H1 (cell line): ENCODE measurements at regions of chr6 and their contacts with region 1.

Region 1: GRCh38 chr6:112180095-112180820 is 74.1 kb downstream of the LAMA4 start:
- DNase-seq: no peak
- H3K4me3 ChIP-seq: no peak overlapping the region
- H3K27ac ChIP-seq: no peak overlapping the region
- H3K4me1 ChIP-seq: no peaks in the 10 kb centered on the region
- H3K27me3 ChIP-seq: no peaks in the 10 kb centered on the region
- CTCF ChIP-seq: peak in 2 of 3 experiments; percentile 58 to 64; a peak in 2 of 4 replicates
- EP300 ChIP-seq: no peak
- POLR2A ChIP-seq: no peak
- RAD21 ChIP-seq: peak; percentile 84 to 86

Region 2: DNA sequence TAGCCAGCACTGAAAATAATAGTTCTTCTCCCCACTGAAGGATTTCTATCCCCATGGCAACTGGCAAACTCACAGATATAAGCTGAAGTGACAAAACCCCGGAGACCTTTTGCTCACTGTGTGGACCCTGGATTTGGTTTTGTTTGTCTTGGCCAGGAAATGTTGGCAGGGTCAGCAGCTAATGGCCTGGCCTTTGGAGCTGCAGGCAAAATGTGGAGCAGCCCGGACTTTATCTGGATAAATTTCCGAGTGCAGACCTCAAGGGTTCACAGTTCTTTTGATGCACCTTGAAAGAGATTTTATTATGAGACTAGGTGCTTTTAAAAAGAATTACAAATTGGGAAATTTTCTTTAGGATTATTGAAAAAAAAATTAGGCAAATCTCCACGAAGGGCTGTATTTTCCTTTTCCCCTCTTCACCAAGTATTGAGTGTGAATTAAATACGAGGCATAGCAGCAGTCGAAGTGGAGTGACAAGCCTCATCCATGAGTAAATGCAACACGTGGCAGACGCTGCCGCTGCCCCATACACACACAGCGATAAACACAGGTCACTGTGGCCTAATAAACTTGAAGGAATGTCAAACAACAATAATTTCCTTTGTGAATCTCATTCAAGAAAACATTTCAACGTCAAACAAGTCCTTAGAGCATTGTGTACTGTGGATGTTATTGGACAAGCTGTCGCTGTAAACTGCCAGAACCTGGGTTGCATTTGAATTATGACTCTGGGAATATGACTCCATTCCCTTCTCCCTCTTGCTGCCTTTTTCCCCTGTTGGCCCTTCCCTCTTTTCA is 161.4 kb before region 1 on chr6:
- CTCF ChIA-PET with region 1: no interaction called
- POLR2A ChIA-PET with region 1: no interaction called
- DNase-seq: no peak
- H3K4me3 ChIP-seq: no peak overlapping the region
- H3K27ac ChIP-seq: no peak overlapping the region
- H3K4me1 ChIP-seq: no peaks in the 10 kb centered on the region
- H3K27me3 ChIP-seq: no peaks in the 10 kb centered on the region
- CTCF ChIP-seq: no peak
- EP300 ChIP-seq: no peak
- POLR2A ChIP-seq: no peak
- RAD21 ChIP-seq: no peak

Region 3: DNA sequence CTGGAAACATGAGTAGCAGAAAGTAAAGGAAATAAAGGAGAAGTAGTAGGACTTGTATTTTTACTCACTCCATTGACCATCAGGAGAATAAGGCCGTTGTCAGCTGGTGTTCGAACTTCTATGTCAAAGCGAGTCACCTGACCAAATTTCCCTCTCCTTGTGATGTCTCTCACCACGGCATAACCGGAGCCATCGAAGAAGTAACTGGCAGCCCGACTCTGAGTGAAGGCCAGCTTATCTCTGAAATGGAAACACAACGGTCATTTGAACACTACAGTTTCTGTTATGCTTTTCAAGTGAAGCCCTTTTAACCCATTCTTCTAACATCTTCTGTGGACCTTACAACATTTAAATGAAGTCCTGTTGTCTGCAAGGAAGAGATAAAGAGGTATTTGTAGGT is 41.2 kb before region 1 on chr6:
- CTCF ChIA-PET with region 1: no interaction called
- POLR2A ChIA-PET with region 1: no interaction called
- DNase-seq: no peak
- H3K4me3 ChIP-seq: no peak overlapping the region
- H3K27ac ChIP-seq: no peak overlapping the region
- H3K4me1 ChIP-seq: no peaks in the 10 kb centered on the region
- H3K27me3 ChIP-seq: no peaks in the 10 kb centered on the region
- CTCF ChIP-seq: no peak
- EP300 ChIP-seq: no peak
- POLR2A ChIP-seq: no peak
- RAD21 ChIP-seq: no peak

Region 4: DNA sequence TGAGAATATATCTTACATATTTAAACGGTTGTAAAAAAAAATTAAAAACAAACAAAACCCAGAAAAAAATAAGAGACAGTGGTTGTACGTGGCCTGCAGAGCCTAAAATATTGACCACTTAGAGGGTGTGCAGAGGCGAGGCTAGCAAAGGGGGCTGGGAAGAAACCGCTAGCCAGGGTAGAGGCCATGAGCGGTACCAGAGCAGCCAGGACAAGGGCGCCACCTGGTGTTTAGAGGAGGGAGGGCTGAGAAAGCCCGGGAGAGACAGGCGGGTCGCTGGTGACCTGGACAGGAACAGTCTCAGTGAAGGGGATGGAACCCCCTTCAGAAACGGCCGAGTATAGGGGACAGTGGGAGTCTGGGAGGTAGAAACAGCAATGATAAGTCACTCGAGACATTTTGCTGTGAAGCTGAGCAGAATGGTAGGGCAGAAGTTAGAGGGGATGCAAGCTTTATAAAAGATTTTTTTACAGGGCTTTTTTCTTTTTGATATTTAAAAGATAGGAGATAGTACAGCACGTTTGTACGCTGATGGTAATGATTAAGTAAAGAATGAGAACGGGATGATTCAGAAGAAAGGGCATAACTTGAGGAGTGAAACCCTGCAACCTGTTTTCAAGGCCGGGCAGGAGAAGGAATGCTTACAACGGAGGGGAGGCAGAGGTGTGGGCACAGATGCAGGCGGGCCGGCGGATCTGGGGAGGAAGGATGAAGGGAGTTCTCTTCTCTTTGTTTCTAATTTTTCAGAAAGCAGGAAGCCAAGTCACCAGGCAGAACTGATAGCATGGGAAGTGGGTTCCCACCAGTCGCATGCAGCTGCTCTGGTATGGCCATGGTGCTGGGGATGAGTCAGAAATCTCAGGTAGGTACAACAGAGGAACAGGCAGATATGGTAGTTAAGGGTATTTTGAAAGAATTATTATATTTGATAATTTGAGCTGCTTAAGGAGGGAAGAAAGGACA is 16.7 kb before region 1 on chr6:
- CTCF ChIA-PET with region 1: interaction called, 10 read pairs
- POLR2A ChIA-PET with region 1: no interaction called
- DNase-seq: peak; percentile 50 to 94
- H3K4me3 ChIP-seq: no peak overlapping the region
- H3K27ac ChIP-seq: no peak overlapping the region
- H3K4me1 ChIP-seq: no peaks in the 10 kb centered on the region
- H3K27me3 ChIP-seq: no peaks in the 10 kb centered on the region
- CTCF ChIP-seq: peak; percentile 91 to 96 (median 93)
- EP300 ChIP-seq: no peak
- POLR2A ChIP-seq: no peak
- RAD21 ChIP-seq: peak; percentile 91 to 94

Region 5: GRCh38 chr6:112199001-112199403 is 18.7 kb after region 1 on chr6:
- CTCF ChIA-PET with region 1: interaction called, 23 read pairs
- POLR2A ChIA-PET with region 1: no interaction called
- DNase-seq: no peak
- H3K4me3 ChIP-seq: no peak overlapping the region
- H3K27ac ChIP-seq: no peak overlapping the region
- H3K4me1 ChIP-seq: peaks cover 0 to 2% (median 0%) of the 10 kb centered on the region in 4 experiments; a peak in 2 of 7 replicates
- H3K27me3 ChIP-seq: peaks cover 0 to 1% (median 0%) of the 10 kb centered on the region in 4 experiments; a peak in 1 of 7 replicates
- CTCF ChIP-seq: no peak
- EP300 ChIP-seq: no peak
- POLR2A ChIP-seq: no peak
- RAD21 ChIP-seq: no peak

Region 6: GRCh38 chr6:112253841-112254816 is 73.9 kb after region 1 on chr6 and contains the start of gene LAMA4:
- CTCF ChIA-PET with region 1: interaction called, 16 read pairs
- POLR2A ChIA-PET with region 1: no interaction called
- DNase-seq: peak in 1 of 2 experiments; percentile 74
- H3K4me3 ChIP-seq: peak within 1 kb of the TSS; percentile 63 to 76 (median 70)
- H3K27ac ChIP-seq: no peak within 1 kb of the TSS
- H3K4me1 ChIP-seq: peaks cover 0 to 7% (median 2%) of the 10 kb centered on the region in 4 experiments; a peak in 3 of 7 replicates
- H3K27me3 ChIP-seq: peaks cover 2 to 35% (median 16%) of the 10 kb centered on the region in 4 experiments
- CTCF ChIP-seq: no peak
- EP300 ChIP-seq: no peak
- POLR2A ChIP-seq: no peak
- RAD21 ChIP-seq: no peak
- total RNA-seq, gene LAMA4: 0.92 and 1.5 TPM in 2 replicates

Region 7: DNA sequence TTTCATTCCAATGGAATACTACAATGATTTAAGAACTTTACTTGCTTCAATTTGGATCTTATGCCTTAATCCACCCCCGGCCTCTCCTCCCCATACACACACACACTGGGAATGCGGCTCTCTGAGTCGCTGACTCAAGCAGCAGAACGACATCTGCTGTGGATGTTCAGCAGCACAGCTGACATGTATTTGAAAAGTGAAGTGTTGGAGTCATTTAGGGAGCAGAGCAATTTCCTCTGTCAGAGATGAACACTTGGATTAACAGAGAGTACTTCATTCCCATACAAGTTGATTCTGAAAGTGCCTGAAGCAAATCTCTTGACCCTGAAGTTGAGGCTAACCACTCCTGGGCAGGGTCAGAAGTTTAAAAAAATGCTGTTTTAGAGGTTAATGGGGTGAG is 102.0 kb after region 1 on chr6:
- CTCF ChIA-PET with region 1: interaction called, 23 read pairs
- POLR2A ChIA-PET with region 1: no interaction called
- DNase-seq: no peak
- H3K4me3 ChIP-seq: no peak overlapping the region
- H3K27ac ChIP-seq: no peak overlapping the region
- H3K4me1 ChIP-seq: no peaks in the 10 kb centered on the region
- H3K27me3 ChIP-seq: no peaks in the 10 kb centered on the region
- CTCF ChIP-seq: peak in 1 of 3 experiments; percentile 23; a peak in 1 of 4 replicates
- EP300 ChIP-seq: no peak
- POLR2A ChIP-seq: no peak
- RAD21 ChIP-seq: peak; percentile 5 to 22; a peak in 2 of 4 replicates

Region 8: DNA sequence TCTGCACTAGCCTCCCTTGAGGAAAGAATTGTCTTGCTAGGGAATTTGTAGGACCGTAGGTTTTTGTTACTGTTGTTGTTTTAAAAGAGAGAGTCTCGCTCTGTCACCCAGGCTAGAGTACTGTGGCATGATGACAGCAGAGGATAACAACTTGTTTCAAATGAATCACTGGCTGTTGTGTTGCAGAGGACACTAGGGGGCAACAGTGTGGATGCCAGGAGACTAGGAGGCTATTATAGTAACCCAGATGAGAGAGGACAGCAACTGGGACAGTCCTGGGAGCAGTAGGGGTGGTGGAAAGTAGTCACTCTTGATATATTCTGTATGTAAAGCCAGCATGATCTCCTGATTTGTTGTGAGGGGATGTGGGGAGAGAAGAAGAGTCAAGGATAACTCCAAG is 115.9 kb after region 1 on chr6:
- CTCF ChIA-PET with region 1: interaction called, 26 read pairs
- POLR2A ChIA-PET with region 1: no interaction called
- DNase-seq: peak in 1 of 2 experiments; percentile 46
- H3K4me3 ChIP-seq: no peak overlapping the region
- H3K27ac ChIP-seq: no peak overlapping the region
- H3K4me1 ChIP-seq: no peaks in the 10 kb centered on the region
- H3K27me3 ChIP-seq: no peaks in the 10 kb centered on the region
- CTCF ChIP-seq: peak; percentile 33 to 71 (median 56)
- EP300 ChIP-seq: no peak
- POLR2A ChIP-seq: no peak
- RAD21 ChIP-seq: peak; percentile 48 to 52

Region 9: DNA sequence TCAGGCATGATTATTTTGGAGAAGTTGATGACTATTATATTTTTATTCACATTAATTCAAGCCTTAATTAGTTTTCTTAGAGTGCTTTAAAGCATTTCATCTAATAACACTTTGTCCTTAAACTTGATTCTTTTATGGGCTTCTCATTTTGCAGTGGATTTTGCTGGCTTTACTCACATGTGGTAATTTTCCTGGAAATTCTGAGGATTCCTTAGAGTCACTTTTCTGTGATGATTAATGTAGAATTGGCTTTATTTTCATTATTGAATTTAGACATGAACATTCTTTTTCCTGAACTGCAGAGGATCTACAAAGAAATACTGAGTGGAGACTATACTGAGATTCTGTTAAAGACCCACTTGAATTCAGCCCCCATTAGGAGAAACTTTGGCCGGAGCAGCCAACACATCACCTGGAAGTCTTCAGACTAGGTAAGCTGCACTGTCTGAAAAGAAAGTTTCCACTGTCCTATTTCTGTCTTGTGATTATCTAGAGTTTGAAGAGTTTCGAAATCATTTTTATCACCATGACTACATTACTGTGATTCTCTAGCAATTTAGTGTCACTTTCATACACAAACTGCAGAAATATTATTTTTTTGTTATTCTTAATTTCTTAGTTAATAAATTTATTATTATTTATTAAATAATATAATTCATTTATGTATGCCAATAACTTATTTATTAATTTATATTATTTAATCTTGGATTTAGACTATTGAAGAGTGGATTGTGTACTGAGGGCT is 168.8 kb after region 1 on chr6:
- CTCF ChIA-PET with region 1: no interaction called
- POLR2A ChIA-PET with region 1: no interaction called
- DNase-seq: no peak
- H3K4me3 ChIP-seq: no peak overlapping the region
- H3K27ac ChIP-seq: no peak overlapping the region
- H3K4me1 ChIP-seq: no peaks in the 10 kb centered on the region
- H3K27me3 ChIP-seq: no peaks in the 10 kb centered on the region
- CTCF ChIP-seq: no peak
- EP300 ChIP-seq: no peak
- POLR2A ChIP-seq: no peak
- RAD21 ChIP-seq: no peak

Region 10: DNA sequence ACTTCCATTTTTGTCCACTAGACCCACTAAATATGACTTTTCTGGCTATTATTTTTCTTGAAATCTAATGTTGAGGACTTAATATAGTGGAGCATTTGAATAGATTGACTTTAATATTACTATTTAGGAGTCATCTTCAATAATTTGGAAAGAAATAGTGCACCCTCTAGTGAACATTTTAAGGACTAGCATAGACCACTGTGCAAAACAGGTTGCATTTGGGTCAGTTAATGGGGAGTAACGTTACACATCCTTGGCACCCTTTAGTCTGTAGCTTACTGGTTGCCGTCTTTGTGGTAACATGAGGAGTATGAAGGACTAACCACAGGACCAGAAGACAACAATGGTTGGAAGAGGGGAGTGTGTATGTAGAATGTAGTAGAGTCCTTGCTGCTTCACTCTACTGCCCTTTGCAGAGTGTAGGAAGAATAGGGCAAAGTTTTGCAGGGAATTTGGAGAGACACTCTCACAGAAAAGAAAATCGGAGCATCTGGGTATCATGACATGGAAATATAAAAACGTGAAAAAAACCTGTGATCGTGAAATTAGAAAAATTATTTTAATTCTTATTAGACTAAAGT is 192.1 kb after region 1 on chr6:
- CTCF ChIA-PET with region 1: interaction called, 19 read pairs
- POLR2A ChIA-PET with region 1: no interaction called
- DNase-seq: no peak
- H3K4me3 ChIP-seq: no peak overlapping the region
- H3K27ac ChIP-seq: no peak overlapping the region
- H3K4me1 ChIP-seq: no peaks in the 10 kb centered on the region
- H3K27me3 ChIP-seq: no peaks in the 10 kb centered on the region
- CTCF ChIP-seq: peak in 1 of 3 experiments; percentile 35; a peak in 1 of 4 replicates
- EP300 ChIP-seq: no peak
- POLR2A ChIP-seq: no peak
- RAD21 ChIP-seq: peak; percentile 12 to 32; a peak in 3 of 4 replicates